ENCODE measurements at regions of chr6 and their contacts with region 1.

Region 1: GRCh38 chr6:44630125-44631028 is 242.9 kb downstream of the CDC5L start:
- DNase-seq: no peak
- H3K4me3 ChIP-seq: no peak overlapping the region
- H3K27me3 ChIP-seq: peaks cover 7% of the 10 kb centered on the region
- CTCF ChIP-seq: peak; percentile 83

Region 2: DNA sequence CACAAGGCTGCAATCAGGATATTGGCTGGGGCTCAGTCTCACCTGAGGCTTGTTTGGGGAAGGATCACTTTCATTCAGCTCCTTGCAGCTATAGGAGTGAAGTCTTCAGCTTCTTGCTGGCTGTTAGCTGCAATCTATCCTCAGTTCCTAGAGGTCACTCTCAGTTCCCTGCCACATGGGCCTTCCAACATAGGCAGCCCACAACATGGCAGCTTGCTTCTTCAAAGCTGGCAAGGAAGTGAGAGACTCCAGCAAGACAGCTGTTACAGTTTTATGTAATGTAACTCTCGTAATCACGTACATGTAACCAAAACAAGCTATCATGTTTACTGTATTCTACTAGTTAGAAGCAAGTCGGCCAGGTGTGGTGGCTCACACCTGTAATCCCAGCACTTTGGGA is 16.0 kb before region 1 on chr6:
- CTCF ChIA-PET with region 1: interaction called, 14 read pairs
- POLR2A ChIA-PET with region 1: no interaction called
- DNase-seq: no peak
- H3K4me3 ChIP-seq: no peak overlapping the region
- H3K27me3 ChIP-seq: peaks cover 7% of the 10 kb centered on the region; the same call in 1 of the 2 replicates
- CTCF ChIP-seq: no peak

Region 3: GRCh38 chr6:44645276-44645675 is 14.9 kb after region 1 on chr6:
- CTCF ChIA-PET with region 1: interaction called, 11 read pairs
- POLR2A ChIA-PET with region 1: no interaction called
- DNase-seq: no peak
- H3K4me3 ChIP-seq: no peak overlapping the region
- H3K27me3 ChIP-seq: no peaks in the 10 kb centered on the region
- CTCF ChIP-seq: peak; percentile 15; the same call in 1 of the 2 replicates

Region 4: DNA sequence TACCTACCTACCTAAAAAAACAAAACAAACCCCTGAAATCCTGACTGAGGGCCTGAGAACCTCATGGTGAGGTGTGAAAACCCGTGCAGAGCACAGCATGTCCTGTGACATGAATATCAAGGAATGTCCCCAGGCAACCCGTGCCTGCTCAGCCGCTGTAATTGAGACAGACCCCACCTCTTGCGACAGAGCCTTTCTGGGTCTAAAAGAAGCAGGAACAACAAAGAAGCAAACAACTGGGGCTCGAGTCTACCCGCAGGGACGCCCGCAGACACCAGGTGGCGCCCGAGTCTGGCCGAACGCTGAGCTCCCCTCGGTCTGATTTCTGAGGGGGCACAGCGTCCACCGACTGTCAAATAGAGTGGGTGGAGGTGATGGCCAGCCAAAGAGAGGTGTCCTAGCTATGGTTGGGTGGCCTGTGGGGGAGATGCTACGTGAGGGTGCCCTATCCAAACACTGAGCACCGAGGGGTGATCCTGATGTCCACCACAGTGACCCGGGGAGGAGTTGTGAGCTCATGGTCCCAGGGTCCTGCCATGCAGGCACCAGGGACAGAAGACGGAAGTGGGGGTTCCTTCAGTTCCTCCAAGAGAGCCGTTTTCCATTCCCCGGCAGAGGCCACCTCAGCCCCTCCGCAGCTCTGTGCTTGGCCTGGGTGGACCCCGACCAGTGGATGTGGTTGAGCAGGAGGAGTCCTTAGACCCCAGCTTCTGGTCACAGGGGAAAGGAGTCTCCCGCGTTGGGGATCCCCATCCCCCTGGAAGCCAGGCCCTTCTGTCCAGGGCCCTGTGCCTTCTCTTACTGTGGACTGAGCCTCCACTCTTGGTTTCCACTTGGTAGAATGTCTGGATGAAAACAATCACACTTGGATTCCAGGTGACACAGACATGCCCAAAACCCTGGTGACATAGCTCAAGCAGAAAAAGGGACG is 25.3 kb after region 1 on chr6:
- CTCF ChIA-PET with region 1: interaction called, 16 read pairs
- POLR2A ChIA-PET with region 1: no interaction called
- DNase-seq: no peak
- H3K4me3 ChIP-seq: no peak overlapping the region
- H3K27me3 ChIP-seq: no peaks in the 10 kb centered on the region
- CTCF ChIP-seq: peak; percentile 96

Region 5: GRCh38 chr6:44665683-44666082 is 35.3 kb after region 1 on chr6:
- CTCF ChIA-PET with region 1: no interaction called
- POLR2A ChIA-PET with region 1: no interaction called
- DNase-seq: no peak
- H3K4me3 ChIP-seq: no peak overlapping the region
- H3K27me3 ChIP-seq: no peaks in the 10 kb centered on the region
- CTCF ChIP-seq: no peak

Region 6: DNA sequence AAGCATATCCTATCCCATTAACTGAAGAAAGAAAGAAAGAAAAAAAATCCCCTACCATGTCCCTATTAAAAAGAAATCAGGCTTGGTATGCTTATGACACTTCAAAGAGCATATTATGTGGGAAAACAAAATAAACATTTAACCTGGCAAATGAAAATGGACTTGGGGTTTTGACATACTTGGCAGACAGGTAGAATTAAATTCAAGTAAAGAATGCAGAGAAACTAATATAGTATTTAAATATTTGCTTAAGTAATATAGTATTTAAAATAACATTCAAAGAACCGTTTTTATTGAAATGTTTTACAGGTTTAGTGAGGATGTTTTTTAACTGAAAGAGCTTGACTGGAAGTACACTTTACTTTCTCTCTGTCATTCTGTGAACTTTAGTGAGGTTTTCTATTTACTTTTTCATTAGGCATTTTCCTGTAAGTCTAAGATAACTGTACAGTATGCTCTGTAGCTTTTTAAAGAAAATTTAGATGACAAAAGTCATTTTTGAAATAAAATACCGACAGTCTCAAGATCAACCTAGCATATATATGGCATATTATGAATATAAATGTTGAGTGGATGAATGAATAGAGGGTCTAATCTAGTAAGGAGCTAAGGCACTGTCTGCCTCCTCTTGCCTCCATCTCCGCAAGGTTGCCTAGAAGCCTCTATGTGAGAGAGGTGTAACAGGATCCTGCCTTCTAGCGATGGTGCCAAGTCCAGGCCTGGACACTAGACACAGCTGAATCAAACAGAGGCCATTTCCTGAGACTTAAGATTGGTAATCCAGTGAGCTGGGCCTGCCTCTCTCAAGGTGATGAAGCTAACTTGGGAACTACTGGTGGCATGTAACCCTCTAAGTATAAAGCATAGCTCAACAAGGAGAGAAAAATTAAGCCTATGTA is 353.3 kb after region 1 on chr6:
- CTCF ChIA-PET with region 1: no interaction called
- POLR2A ChIA-PET with region 1: no interaction called
- DNase-seq: no peak
- H3K4me3 ChIP-seq: no peak overlapping the region
- H3K27me3 ChIP-seq: no peaks in the 10 kb centered on the region
- CTCF ChIP-seq: no peak

Region 7: GRCh38 chr6:45922728-45923351 is 1292.5 kb after region 1 on chr6:
- CTCF ChIA-PET with region 1: interaction called, 41 read pairs
- POLR2A ChIA-PET with region 1: no interaction called
- DNase-seq: no peak
- H3K4me3 ChIP-seq: no peak overlapping the region
- H3K27me3 ChIP-seq: no peaks in the 10 kb centered on the region
- CTCF ChIP-seq: peak; percentile 85